Panc1 (cell line): ENCODE measurements at regions of chr6 and their contacts with region 1.

Region 1: GRCh38 chr6:136684466-136684865 is 107.8 kb downstream of the MAP3K5 start:
- DNase-seq: no peak
- ATAC-seq: no peak
- H3K4me3 ChIP-seq: no peak overlapping the region
- H3K27ac ChIP-seq: no peak overlapping the region
- H3K4me1 ChIP-seq: no peaks in the 10 kb centered on the region
- H3K27me3 ChIP-seq: no peaks in the 10 kb centered on the region
- CTCF ChIP-seq: no peak

Region 2: DNA sequence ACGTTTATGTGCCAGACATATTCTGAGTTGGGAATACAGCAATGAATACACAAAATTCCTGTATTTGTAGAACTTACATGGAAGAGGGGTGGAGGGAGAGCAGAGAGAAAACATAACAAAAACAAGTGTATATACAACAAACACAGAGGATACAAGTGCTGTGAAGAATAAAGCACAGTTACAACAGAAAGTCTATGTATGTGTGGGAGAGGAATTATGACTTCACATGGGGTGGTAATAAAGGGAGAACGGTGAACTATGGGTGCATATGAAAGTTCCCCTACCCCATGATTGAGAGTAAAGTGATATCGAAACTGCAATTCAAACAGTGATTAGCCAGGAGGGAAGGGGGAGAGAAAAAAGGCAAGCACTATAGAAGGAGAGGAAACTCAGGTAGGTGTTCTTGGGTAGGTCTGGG is 1654.4 kb before region 1 on chr6:
- CTCF ChIA-PET with region 1: no interaction called
- POLR2A ChIA-PET with region 1: interaction called, 10 read pairs
- in situ Hi-C with region 1: no loop called
- intact Hi-C with region 1: no loop called
- DNase-seq: no peak
- ATAC-seq: no peak
- H3K4me3 ChIP-seq: no peak overlapping the region
- H3K27ac ChIP-seq: no peak overlapping the region
- H3K4me1 ChIP-seq: peaks cover 2% of the 10 kb centered on the region; the same call in 1 of the 2 replicates
- H3K27me3 ChIP-seq: no peaks in the 10 kb centered on the region
- CTCF ChIP-seq: no peak

Region 3: GRCh38 chr6:136618086-136618485 is 66.4 kb before region 1 on chr6:
- CTCF ChIA-PET with region 1: no interaction called
- POLR2A ChIA-PET with region 1: no interaction called
- in situ Hi-C with region 1: no loop called
- intact Hi-C with region 1: no loop called
- DNase-seq: no peak
- ATAC-seq: no peak
- H3K4me3 ChIP-seq: no peak overlapping the region
- H3K27ac ChIP-seq: no peak overlapping the region
- H3K4me1 ChIP-seq: no peaks in the 10 kb centered on the region
- H3K27me3 ChIP-seq: no peaks in the 10 kb centered on the region
- CTCF ChIP-seq: no peak